ENCODE measurements at regions of chr11 and their contacts with region 1.

Region 1: DNA sequence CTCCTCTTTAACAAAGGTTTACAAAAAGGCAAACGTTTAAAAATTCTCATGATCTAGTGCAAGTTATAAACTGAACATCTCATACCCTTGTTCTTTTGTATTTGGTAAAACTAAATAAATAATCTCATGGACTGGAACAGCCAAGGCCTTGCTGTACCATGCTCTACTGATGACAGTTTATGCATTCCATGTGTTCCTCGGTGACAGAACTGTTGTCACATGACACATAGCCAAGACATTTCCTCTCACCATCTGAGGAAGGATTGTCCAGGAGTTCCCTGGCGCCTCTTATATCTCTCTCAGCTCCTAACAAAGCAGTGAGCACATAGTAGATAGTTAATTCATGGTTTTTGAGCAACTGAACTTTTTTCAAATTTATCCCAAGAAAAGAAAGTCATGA is 12.6 kb downstream of the CCDC83 start:
- DNase-seq: no peak
- ATAC-seq: no peak

Region 2: GRCh38 chr11:85922367-85922766 is 54.6 kb after region 1 on chr11:
- intact Hi-C with region 1: loop called (anchors 10 kb)
- DNase-seq: no peak
- ATAC-seq: no peak

Region 3: DNA sequence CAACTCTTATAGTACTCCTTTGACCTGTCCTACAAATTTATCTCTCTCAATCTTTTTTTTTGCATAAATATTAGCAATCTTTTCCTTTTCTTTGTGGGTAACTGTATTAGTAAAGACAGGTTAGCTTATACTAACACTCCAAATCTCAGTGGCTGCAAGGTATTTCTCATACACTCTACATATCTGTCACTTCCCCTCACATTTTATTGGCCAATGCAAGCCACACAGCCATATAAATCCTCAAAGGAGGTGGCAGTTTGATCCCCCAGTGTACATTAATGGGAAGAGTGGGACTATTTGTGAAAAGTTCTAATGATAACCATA is 334.2 kb after region 1 on chr11:
- intact Hi-C with region 1: loop called (anchors 10 kb)
- DNase-seq: no peak
- ATAC-seq: peak; percentile 49

Measured in Right ventricle myocardium superior (tissue), 1 donor.